PC-9 (cell line): ENCODE measurements at regions of chr7 and their contacts with region 1.

Region 1: GRCh38 chr7:28802450-28802849 is 155.7 kb downstream of the TRIL start:
- DNase-seq: no peak
- H3K4me3 ChIP-seq: no peak overlapping the region
- H3K27ac ChIP-seq: no peak overlapping the region
- H3K4me1 ChIP-seq: no peaks in the 10 kb centered on the region
- H3K27me3 ChIP-seq: no peaks in the 10 kb centered on the region
- CTCF ChIP-seq: no peak

Region 2: DNA sequence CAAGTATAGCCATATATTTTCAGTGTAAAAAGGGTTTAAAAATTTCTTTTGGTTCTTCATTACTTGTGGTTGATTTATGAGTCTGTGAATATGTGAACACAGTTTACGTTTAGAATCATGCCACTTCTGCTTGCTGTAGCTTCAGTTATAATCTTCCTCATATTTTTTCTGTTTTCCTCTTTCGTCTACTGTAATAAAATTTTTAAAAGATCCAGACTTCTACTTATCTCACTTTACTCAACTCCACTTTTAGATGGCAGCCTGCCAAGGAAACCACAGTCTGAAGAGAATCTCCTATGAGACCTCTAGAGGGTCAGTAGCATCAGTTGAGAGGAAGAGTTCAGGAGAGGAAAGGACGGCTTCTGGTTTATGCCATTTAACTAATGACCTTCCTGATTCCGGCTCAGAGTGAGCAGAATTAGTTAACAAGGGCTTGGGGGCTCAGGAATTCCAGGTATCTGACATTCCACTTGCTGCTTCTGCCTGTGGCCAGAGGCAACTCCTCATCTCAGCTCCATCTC is 368.7 kb before region 1 on chr7:
- CTCF ChIA-PET with region 1: no interaction called
- POLR2A ChIA-PET with region 1: interaction called, 23 read pairs
- intact Hi-C with region 1: no loop called
- DNase-seq: no peak
- H3K4me3 ChIP-seq: no peak overlapping the region
- H3K27ac ChIP-seq: no peak overlapping the region
- H3K4me1 ChIP-seq: no peaks in the 10 kb centered on the region
- H3K27me3 ChIP-seq: 0 out of 2 replicates have a peak, but pooled peaks cover 8% of the 10 kb centered on the region
- CTCF ChIP-seq: no peak

Region 3: DNA sequence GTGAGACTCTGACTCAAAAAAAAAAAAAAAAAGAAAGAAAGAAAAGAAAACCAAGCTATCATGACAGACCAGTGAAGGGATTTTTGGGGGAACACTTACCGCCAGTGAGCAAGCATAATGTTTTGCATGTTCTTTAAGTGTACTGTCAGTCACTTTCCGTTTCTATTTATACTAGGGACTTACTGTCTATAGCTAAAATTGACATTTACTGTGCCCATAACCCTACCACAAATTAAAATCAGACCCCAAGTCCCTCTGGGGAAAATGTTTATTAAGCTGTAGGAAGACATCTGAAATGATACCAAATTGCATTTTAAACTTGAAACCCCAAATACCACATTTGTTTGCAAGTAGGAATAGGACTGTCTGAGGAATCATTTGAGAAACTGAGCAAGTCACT is 97.1 kb before region 1 on chr7:
- CTCF ChIA-PET with region 1: no interaction called
- POLR2A ChIA-PET with region 1: no interaction called
- intact Hi-C with region 1: no loop called
- DNase-seq: no peak
- H3K4me3 ChIP-seq: no peak overlapping the region
- H3K27ac ChIP-seq: no peak overlapping the region
- H3K4me1 ChIP-seq: peaks cover 5% of the 10 kb centered on the region; the same call in 1 of the 2 replicates
- H3K27me3 ChIP-seq: no peaks in the 10 kb centered on the region
- CTCF ChIP-seq: no peak